HEK293 (cell line): ENCODE measurements at regions of chr10 and their contacts with region 1.

Region 1: GRCh38 chr10:29555746-29556481 is 78.9 kb downstream of the SVIL start:
- H3K4me3 ChIP-seq: no peak overlapping the region
- H3K27ac ChIP-seq: no peak overlapping the region
- H3K4me1 ChIP-seq: peaks cover 6% of the 10 kb centered on the region; the same call in 1 of the 2 replicates
- CTCF ChIP-seq: no peak

Region 2: DNA sequence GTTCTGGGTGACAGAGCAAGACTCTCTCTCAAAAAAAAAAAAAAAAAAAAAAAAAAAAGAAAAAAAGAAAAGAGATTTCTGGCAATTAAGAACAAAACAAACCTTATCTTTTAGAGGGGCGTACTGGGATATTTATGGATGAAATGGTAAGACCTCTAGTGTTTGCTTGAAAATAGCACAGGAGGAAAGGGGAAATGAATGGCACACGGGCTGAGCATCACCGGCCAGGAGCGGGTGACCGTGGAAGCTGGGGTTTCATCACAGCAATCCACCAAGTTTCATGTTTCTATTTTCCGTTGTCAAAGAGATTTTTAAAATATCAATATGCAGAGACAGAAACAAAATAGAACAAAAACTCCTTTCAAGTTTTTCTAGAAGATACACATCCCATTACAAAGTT is 26.8 kb before region 1 on chr10:
- CTCF ChIA-PET with region 1: no interaction called
- POLR2A ChIA-PET with region 1: no interaction called
- H3K4me3 ChIP-seq: no peak overlapping the region
- H3K27ac ChIP-seq: no peak overlapping the region
- H3K4me1 ChIP-seq: no peaks in the 10 kb centered on the region
- CTCF ChIP-seq: no peak

Region 3: DNA sequence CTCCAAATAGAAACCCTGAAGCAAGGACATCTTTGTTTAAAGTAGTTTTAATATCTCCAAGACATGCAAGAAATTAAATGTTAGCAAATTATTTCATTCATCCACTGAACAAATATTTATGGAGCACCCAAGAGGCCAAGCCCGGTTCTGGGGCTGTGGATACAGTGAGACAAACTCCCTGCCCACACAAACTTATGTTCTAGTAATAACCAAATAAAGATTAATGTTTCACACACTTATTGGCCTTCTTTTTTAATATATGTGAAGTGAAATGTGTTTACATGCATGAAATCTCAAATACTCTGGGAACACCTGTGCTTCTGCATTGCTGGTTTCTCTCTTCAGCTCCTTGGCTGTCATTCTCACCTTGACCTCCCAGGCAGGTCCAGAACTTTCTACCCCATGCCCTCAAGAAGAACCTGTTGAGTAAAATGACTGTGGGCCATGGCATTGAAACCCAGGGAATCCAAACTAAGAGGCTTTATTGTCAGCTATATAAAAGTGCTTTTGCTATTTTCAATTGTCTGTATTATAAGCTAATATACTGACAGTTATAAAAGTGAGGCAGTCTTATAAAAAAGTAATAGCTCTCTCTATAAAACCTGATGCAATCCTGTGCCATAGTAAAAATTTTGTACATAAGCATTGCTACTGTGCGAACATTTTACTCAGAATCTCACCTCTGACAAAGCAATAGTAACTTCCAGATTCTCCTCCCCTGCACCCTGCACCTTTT is 35.2 kb after region 1 on chr10:
- CTCF ChIA-PET with region 1: interaction called, 10 read pairs
- POLR2A ChIA-PET with region 1: no interaction called
- H3K4me3 ChIP-seq: no peak overlapping the region
- H3K27ac ChIP-seq: no peak overlapping the region
- H3K4me1 ChIP-seq: peaks cover 17% of the 10 kb centered on the region; the same call in 1 of the 2 replicates
- CTCF ChIP-seq: no peak

Region 4: DNA sequence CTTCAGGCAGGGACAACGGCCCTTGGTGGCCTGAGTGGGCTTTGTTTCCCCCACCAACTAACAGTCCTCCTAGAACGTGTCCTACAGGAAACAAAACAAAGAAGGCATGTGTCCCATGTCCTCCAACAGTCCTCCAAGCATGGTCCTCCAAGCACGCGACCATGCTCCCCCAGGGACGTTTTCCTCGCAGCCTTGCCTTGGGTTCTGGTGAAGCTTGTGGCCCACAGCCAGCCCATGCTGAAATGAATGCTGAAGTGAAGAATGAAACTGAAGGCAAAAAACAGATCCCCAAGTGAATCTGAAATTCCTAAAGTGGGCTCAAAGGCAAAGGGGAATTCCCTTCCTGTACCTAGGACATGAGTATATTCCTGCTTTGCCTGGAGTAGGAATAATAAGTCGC is 326.9 kb after region 1 on chr10:
- CTCF ChIA-PET with region 1: no interaction called
- POLR2A ChIA-PET with region 1: no interaction called
- H3K4me3 ChIP-seq: no peak overlapping the region
- H3K27ac ChIP-seq: no peak overlapping the region
- H3K4me1 ChIP-seq: no peaks in the 10 kb centered on the region
- CTCF ChIP-seq: no peak